Upper lobe of right lung (tissue), 1 donor: ENCODE measurements at regions of chr12 and their contacts with region 1.

Region 1: DNA sequence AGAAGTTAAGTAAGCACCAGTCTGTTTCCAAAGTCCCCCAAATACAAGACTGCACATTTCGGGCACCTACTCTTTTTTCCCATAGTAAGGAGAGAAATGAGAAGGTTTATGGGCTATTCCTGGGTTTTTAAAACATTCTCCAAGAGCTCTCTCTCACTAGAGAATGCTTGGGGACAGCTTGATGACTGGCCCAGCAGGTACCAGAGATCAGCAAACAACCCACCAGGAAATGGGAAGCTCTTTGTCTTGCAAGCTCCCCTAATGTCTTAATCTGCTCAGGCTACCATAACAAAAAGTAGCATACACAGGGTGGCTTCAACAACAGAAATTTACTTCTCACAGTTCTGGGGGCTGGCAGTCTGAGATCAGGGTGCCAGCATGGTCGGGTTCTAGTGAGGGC is 41.8 kb upstream of the CRY1 start:
- DNase-seq: no peak
- ATAC-seq: no peak
- H3K4me3 ChIP-seq: no peak overlapping the region
- H3K27ac ChIP-seq: no peak overlapping the region
- H3K4me1 ChIP-seq: no peaks in the 10 kb centered on the region
- H3K27me3 ChIP-seq: no peaks in the 10 kb centered on the region
- CTCF ChIP-seq: no peak

Region 2: DNA sequence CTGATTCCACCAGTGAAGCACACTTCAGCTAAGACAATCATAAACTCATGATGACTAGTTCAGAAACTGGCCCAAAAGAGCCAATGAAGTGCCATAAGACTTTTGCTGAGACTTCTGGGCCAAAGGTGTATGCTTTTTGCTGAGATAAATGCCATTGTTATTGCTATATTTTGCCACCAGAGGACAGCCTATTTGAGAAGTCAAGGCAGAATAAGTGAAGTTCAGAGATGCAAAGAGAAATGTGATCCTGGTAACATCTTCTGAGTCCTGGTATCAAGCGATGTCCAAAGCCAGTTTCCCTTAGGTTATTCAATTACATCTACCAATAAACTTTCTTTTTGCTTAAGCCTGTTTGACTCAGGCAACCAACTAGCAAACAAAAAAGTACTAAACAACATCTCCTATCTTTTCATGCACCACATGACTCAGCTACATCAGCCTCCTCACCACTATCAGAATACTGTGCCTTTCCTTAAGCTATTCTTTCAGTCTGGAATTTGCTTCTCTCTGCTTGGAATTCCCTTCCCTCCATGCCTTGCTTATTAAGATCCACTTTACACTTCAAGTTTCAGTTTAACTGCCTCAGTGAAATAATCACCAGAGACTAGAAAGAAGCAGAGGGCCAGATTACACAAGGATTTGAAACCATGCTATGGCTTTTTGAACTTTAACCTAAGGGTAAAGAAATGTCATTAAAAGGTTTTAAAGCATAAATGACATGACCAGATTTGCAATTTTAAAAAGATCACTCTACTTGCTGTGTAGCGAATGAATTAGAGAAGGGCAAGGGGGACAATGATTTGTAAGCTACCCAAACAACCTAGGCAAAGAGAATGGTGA is 55.8 kb before region 1 on chr12:
- intact Hi-C with region 1: no loop called
- DNase-seq: no peak
- ATAC-seq: peak; percentile 26
- H3K4me3 ChIP-seq: no peak overlapping the region
- H3K27ac ChIP-seq: no peak overlapping the region
- H3K4me1 ChIP-seq: peaks cover 14% of the 10 kb centered on the region
- H3K27me3 ChIP-seq: no peaks in the 10 kb centered on the region
- CTCF ChIP-seq: peak; percentile 47

Region 3: DNA sequence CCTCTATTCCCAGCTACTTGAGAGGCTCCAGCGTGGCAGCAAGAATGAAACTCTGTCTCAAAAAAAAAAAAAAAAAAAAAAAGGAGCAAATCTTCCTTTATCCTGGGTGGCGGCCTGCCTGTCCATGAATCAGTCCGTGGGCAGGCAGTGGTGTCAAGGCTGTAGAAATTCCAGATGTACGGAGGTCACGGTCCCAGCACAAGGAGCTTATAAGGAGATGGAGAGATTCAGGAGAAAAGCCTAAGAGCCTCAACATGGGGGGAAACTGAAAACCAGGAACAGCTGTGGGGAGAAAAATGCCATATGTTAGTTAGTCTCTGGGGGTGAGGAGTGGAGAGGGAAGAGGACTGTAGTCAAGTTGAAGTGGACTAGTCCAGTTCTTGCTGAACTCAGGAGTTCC is 88.6 kb after region 1 on chr12:
- intact Hi-C with region 1: no loop called
- DNase-seq: no peak
- ATAC-seq: no peak
- H3K4me3 ChIP-seq: no peak overlapping the region
- H3K27ac ChIP-seq: no peak overlapping the region
- H3K4me1 ChIP-seq: no peaks in the 10 kb centered on the region
- H3K27me3 ChIP-seq: no peaks in the 10 kb centered on the region
- CTCF ChIP-seq: no peak

Region 4: GRCh38 chr12:107436376-107436775 is 301.2 kb after region 1 on chr12:
- intact Hi-C with region 1: no loop called
- DNase-seq: no peak
- ATAC-seq: no peak
- H3K4me3 ChIP-seq: no peak overlapping the region
- H3K27ac ChIP-seq: no peak overlapping the region
- H3K4me1 ChIP-seq: no peaks in the 10 kb centered on the region
- H3K27me3 ChIP-seq: no peaks in the 10 kb centered on the region
- CTCF ChIP-seq: no peak

Region 5: DNA sequence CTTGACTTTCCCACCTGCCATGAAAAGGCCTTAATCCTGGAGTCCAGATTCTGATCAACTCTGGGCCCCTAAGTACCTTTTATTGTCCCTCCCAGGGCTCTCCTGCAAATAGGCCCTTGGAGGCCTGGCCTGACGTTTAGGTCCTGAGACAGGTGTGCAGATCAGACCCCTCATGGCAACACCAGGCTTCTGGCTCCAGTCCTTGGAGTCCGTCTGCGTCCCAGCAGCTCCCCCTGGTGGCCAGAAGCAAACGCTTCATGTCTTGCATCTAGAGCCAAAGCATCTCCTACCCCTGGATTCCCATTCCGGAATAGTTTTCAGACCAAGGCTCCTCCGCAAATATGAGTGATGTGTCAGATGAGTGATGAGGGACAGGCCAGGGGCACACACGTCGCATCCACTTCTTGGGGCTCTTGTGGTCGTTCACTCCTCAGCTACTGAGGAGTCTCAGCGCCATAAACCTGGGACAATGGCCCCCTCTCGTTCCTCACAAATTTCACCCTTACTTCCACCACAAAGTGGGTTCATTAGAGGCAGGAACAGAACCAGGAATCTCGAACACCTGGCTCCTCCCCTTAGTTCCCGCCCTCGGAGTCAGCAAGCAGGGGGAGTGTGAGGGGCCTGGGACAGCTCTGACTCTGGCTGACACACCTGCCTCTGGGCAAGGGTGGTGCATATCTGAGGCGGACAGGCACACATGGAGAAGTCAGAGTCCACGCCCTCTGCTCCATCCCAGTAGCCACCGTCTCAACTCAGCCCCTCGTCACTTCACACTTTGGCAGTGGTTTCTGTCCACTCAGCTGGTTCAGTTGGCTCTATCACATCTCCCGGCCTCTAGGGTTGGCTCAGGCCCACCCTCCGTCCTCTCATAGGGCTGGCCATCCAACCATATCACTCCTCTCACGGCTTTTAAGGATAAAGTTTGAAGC is 472.6 kb after region 1 on chr12:
- intact Hi-C with region 1: loop called (anchors 5 kb)
- DNase-seq: peak; percentile 89
- ATAC-seq: peak; percentile 90
- H3K4me3 ChIP-seq: no peak overlapping the region
- H3K27ac ChIP-seq: no peak overlapping the region
- H3K4me1 ChIP-seq: no peaks in the 10 kb centered on the region
- H3K27me3 ChIP-seq: no peaks in the 10 kb centered on the region
- CTCF ChIP-seq: peak; percentile 92